Lower leg skin (tissue), 4 donors: ENCODE measurements at regions of chr9 and their contacts with region 1.

Region 1: GRCh38 chr9:134296301-134297081 is 29.8 kb upstream of the RXRA start:
- DNase-seq: no peak
- H3K4me3 ChIP-seq: no peak overlapping the region
- CTCF ChIP-seq: no peak
- POLR2A ChIP-seq: no peak

Region 2: DNA sequence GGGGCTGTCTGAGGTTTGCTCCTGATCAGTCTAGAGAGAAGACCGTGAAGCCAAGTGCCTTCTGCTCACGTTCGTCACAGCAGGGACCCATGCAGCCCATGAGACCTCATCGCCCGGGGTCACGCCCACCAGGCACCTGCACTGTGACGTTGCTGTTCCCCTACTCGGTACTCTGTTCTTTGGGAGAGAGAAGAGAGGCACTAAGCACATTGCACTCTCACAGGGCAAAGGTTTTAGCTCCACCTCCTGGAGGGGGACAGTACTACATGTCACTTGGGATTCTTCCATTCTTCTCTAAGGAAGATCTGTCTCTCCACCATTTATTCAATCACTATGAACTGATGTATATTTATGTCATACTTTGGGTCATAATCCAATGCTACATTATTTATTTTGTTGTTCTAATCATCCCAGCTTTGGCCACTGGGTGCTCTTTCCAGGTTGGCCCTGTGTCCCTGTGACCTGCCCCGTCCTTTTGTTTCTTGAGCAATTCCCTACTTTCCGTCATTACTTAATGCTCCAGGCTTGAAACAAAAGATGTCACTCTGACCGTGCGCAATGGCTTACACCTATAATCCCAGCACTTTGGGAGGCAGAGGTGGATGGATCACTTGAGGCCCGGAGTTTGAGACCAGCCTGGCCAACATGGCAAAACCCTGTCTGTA is 197.2 kb before region 1 on chr9:
- intact Hi-C with region 1: no loop called
- DNase-seq: peak in 1 of 2 donors; percentile 70
- H3K4me3 ChIP-seq: no peak overlapping the region
- CTCF ChIP-seq: no peak
- POLR2A ChIP-seq: no peak

Region 3: DNA sequence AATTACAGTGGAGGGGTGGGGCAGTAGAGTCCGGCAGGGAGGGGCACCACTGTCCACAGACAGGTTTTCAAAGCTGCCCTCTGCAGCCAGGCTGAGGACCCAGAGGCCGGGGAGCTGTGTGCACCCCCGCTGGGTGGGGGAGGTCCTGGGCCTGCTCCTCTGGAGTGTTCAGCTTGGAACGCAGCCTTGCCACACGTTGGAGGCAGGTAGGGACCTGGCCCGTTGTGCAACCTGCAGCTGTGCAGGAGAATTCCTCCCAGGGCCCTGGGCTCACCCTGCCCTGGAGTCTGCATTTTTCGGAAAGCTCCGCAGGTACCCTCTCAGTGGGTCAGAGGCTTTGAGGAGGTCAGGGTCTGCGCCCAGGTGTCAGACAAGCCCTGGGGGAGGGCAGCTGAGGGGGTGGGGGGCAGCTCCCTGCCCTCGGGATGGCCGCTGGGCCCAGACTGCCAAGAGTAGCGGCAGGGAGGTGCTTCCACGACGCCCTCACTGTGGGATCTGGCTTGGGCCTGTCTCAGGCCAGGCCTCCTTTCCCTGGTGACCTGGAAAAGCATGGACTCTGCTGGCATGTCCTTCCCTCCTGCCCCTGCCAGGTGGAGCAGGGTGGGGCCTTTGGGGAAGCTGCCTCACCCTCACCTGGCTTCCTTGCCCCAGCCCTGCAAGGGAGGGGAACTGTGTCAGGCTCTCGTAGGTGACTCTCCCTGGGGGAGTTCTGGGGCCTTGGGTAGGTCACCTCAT is 59.2 kb after region 1 on chr9:
- intact Hi-C with region 1: loop called (anchors 2 kb)
- DNase-seq: peak in 1 of 2 donors; percentile 64
- H3K4me3 ChIP-seq: no peak overlapping the region
- CTCF ChIP-seq: no peak
- POLR2A ChIP-seq: no peak

Region 4: GRCh38 chr9:134449221-134449894 is 152.9 kb after region 1 on chr9:
- intact Hi-C with region 1: no loop called
- DNase-seq: peak; percentile 93 to 98
- H3K4me3 ChIP-seq: no peak overlapping the region
- CTCF ChIP-seq: peak in 1 of 3 donors; percentile 59
- POLR2A ChIP-seq: no peak